ENCODE measurements at regions of chr1 and their contacts with region 1.

Region 1: DNA sequence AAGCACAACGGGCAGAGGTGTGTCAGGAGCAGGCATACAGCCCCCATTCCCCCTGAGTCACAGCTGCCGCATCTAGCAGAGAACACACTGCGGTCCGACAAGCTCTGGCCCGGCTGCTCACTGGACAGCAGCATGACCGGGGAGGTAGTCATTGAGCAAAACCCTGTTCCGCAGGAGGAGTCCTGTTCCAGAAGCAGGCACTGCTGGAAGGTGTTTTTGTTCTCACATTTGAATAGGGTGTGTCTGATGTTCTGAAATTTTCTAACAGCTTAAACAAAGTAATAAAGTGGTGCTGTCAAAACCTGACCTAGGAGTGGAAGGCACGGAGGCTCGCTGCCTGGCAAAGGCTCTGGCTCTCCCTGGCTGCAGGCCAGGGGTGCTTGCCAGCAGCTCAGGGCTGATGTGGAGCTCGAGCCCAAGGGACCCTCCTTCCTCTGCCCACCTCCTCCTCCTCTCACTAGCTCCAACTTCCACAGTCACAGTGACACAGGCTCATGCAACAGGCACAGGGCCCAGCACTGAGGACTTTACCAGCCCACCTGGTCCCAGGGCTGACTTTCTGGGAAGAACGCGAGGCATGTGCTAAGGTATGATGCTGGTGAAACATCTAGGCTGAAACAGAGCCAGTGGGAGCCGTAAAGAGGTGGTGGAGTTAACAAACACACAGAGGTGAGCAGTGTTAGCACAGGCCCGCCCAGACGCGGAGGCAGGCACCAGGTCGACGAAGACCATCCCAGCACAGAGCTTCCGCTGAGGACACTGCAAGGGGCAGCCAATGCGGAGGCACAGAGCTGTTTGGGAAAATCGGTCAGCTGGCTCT is 118.6 kb upstream of the IFFO2 start:
- DNase-seq: peak in 1 of 9 donors; percentile 10
- ATAC-seq: peak; percentile 19
- H3K4me3 ChIP-seq: peak overlapping the region; percentile 41
- H3K4me3 Mint-ChIP-seq: peak overlapping the region; percentile 45 to 82 (median 72)
- H3K27ac ChIP-seq: peak overlapping the region; percentile 18
- H3K27ac Mint-ChIP-seq: peak overlapping the region; percentile 32 to 93 (median 76)
- H3K4me1 ChIP-seq: peaks cover 32 to 52% of the 10 kb centered on the region in 2 donors
- H3K4me1 Mint-ChIP-seq: peaks cover 30 to 69% (median 60%) of the 10 kb centered on the region in 7 donors
- H3K27me3 ChIP-seq: no peaks in the 10 kb centered on the region
- H3K27me3 Mint-ChIP-seq: no peaks in the 10 kb centered on the region

Region 2: DNA sequence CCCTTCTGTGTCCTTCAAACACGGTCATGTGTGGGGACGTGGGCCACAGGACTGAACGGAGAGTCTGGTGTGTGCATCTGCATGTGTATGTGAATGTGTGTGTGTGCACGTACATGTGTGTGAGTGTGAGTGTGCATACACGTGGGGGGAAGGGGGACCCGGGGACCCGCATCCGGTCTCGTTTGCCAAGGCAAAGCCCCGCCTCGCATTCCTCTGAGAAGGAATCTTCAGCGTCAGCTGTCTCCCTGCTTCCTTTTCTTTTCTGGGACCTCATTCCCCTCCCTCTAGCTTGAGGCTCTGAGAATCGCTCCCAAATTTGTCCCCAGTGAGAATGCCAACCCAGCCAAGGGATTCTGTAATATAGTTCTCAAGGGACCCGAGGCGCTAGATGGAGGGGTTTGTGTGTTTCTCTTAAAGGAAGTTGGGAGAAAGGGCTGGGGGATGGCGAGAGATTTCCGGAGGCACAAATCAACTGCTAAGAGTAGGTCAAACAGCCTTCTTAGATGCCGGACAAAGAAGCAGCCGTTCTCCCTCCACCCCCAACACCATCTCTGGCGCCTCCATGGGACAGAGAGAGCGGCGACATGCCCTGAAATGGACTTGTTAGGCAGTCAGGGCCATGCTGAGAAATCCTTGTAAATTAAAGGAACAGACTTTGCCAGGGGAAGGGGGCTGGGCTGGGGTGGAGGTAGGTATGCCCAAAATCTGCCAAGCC is 125.3 kb before region 1 on chr1:
- CTCF ChIA-PET with region 1: no interaction called
- POLR2A ChIA-PET with region 1: interaction called, 25 read pairs
- intact Hi-C with region 1: loop called in 1 of 2 experiments (anchors 1 kb)
- DNase-seq: peak in 3 of 9 donors; percentile 19 to 35 (median 32)
- ATAC-seq: no peak
- H3K4me3 ChIP-seq: peak overlapping the region; percentile 50
- H3K4me3 Mint-ChIP-seq: peak overlapping the region; percentile 82 to 94 (median 90)
- H3K27ac ChIP-seq: peak overlapping the region; percentile 98
- H3K27ac Mint-ChIP-seq: peak overlapping the region; percentile 91 to 99 (median 98)
- H3K4me1 ChIP-seq: peaks cover 95 to 99% of the 10 kb centered on the region in 2 donors
- H3K4me1 Mint-ChIP-seq: peaks cover 83 to 98% (median 93%) of the 10 kb centered on the region in 7 donors
- H3K27me3 ChIP-seq: no peaks in the 10 kb centered on the region
- H3K27me3 Mint-ChIP-seq: peaks cover 0 to 2% (median 0%) of the 10 kb centered on the region in 5 donors

Region 3: GRCh38 chr1:19240673-19241538 is 165.8 kb after region 1 on chr1:
- CTCF ChIA-PET with region 1: no interaction called
- POLR2A ChIA-PET with region 1: no interaction called
- intact Hi-C with region 1: no loop called
- DNase-seq: peak; percentile 36 to 79 (median 68)
- ATAC-seq: peak; percentile 100
- H3K4me3 ChIP-seq: no peak overlapping the region
- H3K4me3 Mint-ChIP-seq: no peak overlapping the region
- H3K27ac ChIP-seq: peak overlapping the region; percentile 36
- H3K27ac Mint-ChIP-seq: peak overlapping the region in 5 of 9 donors; percentile 28 to 62 (median 56)
- H3K4me1 ChIP-seq: no peaks in the 10 kb centered on the region
- H3K4me1 Mint-ChIP-seq: peaks cover 0 to 4% (median 0%) of the 10 kb centered on the region in 7 donors
- H3K27me3 ChIP-seq: no peaks in the 10 kb centered on the region
- H3K27me3 Mint-ChIP-seq: no peaks in the 10 kb centered on the region

Measured in naive thymus-derived CD4-positive, alpha-beta T cell (primary cell).